Naive thymus-derived CD4-positive, alpha-beta T cell (primary cell): ENCODE measurements at regions of chr16 and their contacts with region 1.

Region 1: DNA sequence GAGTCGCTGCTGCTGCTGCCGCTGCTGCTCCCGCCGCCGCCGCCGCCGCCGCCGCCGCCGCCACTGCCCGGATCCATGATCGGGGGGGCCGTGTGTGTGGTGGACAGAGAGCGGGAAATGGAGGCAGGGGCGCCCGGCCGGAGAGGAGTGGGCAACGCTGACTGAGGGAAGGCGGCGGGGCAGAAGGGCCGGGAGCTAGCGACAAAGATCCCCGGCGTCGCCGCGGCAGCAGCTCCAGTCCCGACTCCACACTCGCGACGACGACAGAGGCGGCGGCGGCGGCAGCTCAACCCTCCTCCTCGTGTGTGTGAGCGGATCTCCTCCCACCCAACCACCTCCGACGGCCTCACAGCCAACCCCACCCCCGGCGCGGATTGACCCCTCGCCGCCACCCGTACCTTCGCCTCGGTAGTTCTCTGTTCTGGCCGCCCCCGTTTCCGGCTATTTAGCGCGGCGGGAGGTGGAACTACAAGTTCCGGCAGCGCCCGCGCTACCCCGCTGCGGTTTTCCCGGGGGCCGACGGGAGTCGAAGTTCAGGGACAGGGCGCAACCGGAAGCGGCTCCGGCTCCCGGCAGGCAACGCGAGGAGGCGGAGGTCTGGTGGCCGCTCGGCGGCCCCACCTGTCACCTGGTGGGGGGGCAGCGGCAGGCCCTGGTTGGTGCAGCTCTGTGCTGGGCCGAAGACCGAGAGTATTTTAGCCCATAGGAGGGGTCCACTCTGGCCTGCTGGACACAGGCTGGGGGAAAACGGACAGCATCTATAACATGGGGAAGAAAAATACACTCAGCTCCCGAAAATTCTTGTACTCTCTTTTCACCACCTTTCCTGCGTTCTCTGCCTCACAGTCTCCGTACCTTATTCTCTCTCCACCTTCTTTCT is at the start of gene GSPT1:
- DNase-seq: peak; percentile 96 to 100 (median 99)
- ATAC-seq: peak; percentile 94
- H3K4me3 ChIP-seq: peak within 1 kb of the TSS; percentile 74
- H3K4me3 Mint-ChIP-seq: peak within 1 kb of the TSS; percentile 85 to 99 (median 96)
- H3K27ac ChIP-seq: peak within 1 kb of the TSS; percentile 87
- H3K27ac Mint-ChIP-seq: peak within 1 kb of the TSS; percentile 87 to 98 (median 95)
- H3K4me1 ChIP-seq: peaks cover 13 to 24% of the 10 kb centered on the region in 2 donors
- H3K4me1 Mint-ChIP-seq: peaks cover 23 to 37% (median 34%) of the 10 kb centered on the region in 7 donors
- H3K27me3 ChIP-seq: no peaks in the 10 kb centered on the region
- H3K27me3 Mint-ChIP-seq: peaks cover 0 to 10% (median 0%) of the 10 kb centered on the region in 5 donors
- total RNA-seq, gene GSPT1: 92.8 to 148 (median 101) TPM

Region 2: DNA sequence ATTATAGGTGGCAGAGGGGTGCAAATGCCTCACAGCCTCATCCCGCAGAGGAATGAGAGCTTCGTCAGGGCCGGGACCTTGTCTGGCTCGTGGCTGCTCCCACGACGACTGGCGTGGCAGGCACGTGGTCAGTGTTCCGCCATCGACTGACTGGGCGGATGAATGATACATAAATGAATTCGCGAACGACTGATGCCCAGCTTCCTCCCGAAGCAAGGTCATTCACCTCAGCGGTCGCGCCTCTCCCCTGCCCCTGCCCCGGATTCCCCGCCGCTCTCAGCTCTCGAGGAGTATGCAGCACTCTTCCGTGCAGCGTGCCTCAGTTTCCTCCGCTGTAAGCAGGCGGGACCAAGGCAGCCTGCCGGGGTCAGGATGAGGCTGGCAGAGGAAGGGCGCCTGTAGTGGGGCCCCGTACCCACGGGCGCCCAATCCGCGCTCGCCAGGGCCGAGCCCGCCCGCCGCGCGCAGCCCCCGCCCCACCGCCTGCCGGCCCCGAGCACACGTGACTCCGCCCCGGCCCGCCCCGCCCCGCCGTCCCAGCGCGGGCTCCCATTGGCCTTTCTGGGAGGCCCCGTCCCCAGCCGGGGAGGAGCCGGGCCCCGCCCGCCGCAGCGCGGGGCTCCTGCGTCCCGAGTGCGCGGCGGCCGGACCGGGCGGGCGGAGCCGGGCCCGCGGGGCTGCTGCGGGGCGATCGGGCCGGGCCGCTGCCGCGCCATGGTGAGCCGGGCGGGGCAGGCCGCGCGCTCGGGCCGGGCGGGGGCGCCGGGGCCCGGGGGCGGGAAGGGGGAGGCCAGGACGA is 247.9 kb before region 1 on chr16 and contains the start of gene SNN:
- CTCF ChIA-PET with region 1: no interaction called
- POLR2A ChIA-PET with region 1: no interaction called
- intact Hi-C with region 1: loop called in 1 of 2 experiments (anchors 5 kb)
- DNase-seq: peak; percentile 76 to 91 (median 83)
- ATAC-seq: peak; percentile 89
- H3K4me3 ChIP-seq: peak within 1 kb of the TSS; percentile 77
- H3K4me3 Mint-ChIP-seq: peak within 1 kb of the TSS; percentile 88 to 96 (median 91)
- H3K27ac ChIP-seq: peak within 1 kb of the TSS; percentile 85
- H3K27ac Mint-ChIP-seq: peak within 1 kb of the TSS; percentile 85 to 98 (median 96)
- H3K4me1 ChIP-seq: peaks cover 36 to 80% of the 10 kb centered on the region in 2 donors
- H3K4me1 Mint-ChIP-seq: peaks cover 53 to 87% (median 71%) of the 10 kb centered on the region in 7 donors
- H3K27me3 ChIP-seq: no peaks in the 10 kb centered on the region
- H3K27me3 Mint-ChIP-seq: no peaks in the 10 kb centered on the region
- total RNA-seq, gene SNN: 17.0 to 86.8 (median 34.4) TPM

Region 3: GRCh38 chr16:11783319-11784037 is 132.4 kb before region 1 on chr16:
- CTCF ChIA-PET with region 1: no interaction called
- POLR2A ChIA-PET with region 1: no interaction called
- intact Hi-C with region 1: loop called in 1 of 2 experiments (anchors 5 kb)
- DNase-seq: peak; percentile 31 to 89 (median 82)
- ATAC-seq: peak; percentile 90
- H3K4me3 ChIP-seq: peak overlapping the region; percentile 52
- H3K4me3 Mint-ChIP-seq: peak overlapping the region; percentile 79 to 92 (median 85)
- H3K27ac ChIP-seq: peak overlapping the region; percentile 96
- H3K27ac Mint-ChIP-seq: peak overlapping the region; percentile 95 to 99 (median 99)
- H3K4me1 ChIP-seq: peaks cover 33 to 49% of the 10 kb centered on the region in 2 donors
- H3K4me1 Mint-ChIP-seq: peaks cover 41 to 68% (median 62%) of the 10 kb centered on the region in 7 donors
- H3K27me3 ChIP-seq: no peaks in the 10 kb centered on the region
- H3K27me3 Mint-ChIP-seq: no peaks in the 10 kb centered on the region

Region 4: DNA sequence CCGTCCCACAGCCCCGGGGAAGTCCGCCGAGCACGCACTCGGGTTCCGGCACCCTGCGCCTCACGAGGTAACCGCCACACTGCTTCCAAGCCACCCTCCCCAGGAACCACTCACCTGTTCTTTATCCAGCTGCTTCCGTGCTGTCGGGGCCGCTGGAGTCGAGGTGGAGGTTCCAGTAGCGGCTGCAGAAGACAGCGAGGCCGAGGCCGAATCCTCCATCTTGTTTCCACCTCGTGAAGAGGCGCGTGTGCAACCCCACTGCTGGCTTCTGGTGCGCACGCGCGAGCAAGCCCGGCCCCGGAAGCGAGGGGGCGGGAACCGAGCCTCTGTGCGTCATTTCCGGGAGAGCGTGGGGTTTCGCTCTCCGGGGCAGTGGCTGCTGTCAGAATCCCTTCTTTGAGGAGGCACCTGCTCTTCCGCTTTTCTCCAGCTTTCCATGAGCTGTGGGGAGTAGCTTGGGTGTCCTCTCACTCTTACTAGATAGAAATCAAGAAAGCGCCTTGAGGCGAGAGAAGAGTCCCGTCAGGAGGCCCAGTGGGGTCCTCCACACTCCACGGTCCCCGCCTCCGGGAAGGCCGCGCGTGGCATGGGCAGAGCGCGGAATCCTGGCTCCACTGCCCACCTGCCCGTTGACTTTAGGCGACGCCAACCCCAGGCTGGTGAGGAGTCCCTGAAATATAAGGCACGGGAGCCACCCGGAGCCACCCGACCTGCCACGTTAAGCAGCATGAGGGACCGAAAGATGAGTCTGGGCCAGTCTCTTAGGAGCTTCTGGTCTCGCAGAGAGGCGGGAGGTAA is 64.4 kb before region 1 on chr16 and contains the start of gene RSL1D1:
- CTCF ChIA-PET with region 1: no interaction called
- POLR2A ChIA-PET with region 1: interaction called, 10 read pairs
- intact Hi-C with region 1: loop called (anchors 1 kb)
- DNase-seq: peak; percentile 90 to 99 (median 96)
- ATAC-seq: peak; percentile 92
- H3K4me3 ChIP-seq: peak within 1 kb of the TSS; percentile 95
- H3K4me3 Mint-ChIP-seq: peak within 1 kb of the TSS; percentile 94 to 99 (median 99)
- H3K27ac ChIP-seq: peak within 1 kb of the TSS; percentile 89
- H3K27ac Mint-ChIP-seq: peak within 1 kb of the TSS; percentile 91 to 98 (median 97)
- H3K4me1 ChIP-seq: peaks cover 29% of the 10 kb centered on the region in 2 donors
- H3K4me1 Mint-ChIP-seq: peaks cover 32 to 72% (median 63%) of the 10 kb centered on the region in 7 donors
- H3K27me3 ChIP-seq: no peaks in the 10 kb centered on the region
- H3K27me3 Mint-ChIP-seq: no peaks in the 10 kb centered on the region
- total RNA-seq, gene RSL1D1: 141 to 255 (median 219) TPM

Region 5: DNA sequence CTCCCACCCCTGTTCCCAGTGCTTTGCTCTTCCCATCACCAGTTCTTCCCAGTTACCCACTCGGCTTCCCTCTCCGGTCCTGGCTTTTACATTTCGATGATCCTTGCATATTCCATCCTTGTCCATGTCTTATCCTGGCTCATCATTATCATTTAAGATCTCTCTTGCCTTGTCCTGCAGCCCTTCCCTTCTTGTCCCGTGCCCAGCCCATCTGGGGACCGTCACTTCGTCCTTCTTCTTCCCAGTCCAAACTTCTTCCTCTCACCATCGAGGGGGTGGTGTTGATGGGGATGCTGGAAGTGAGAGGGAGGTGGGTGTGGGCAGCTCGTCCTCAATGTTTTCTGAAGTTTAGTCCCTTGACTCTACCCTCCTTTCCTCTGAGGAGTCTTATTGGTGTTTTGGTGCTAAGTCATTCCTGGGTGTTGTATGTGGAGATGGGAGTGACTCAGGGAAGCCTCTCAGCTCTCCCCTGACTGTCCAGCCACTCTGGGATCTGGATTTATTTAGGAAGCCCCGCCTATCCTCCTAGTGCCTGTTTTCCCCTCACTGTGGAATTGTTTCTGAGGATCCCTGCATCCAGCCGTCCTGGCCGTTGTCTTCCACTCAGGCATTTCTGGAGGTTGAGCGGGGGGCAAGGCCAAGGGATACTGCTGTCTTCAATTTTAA is 61.6 kb after region 1 on chr16:
- CTCF ChIA-PET with region 1: no interaction called
- POLR2A ChIA-PET with region 1: interaction called, 4 read pairs
- intact Hi-C with region 1: loop called (anchors 1 kb)
- DNase-seq: no peak
- ATAC-seq: no peak
- H3K4me3 ChIP-seq: peak overlapping the region; percentile 71
- H3K4me3 Mint-ChIP-seq: peak overlapping the region; percentile 85 to 99 (median 94)
- H3K27ac ChIP-seq: peak overlapping the region; percentile 88
- H3K27ac Mint-ChIP-seq: peak overlapping the region; percentile 60 to 97 (median 93)
- H3K4me1 ChIP-seq: peaks cover 11 to 19% of the 10 kb centered on the region in 2 donors
- H3K4me1 Mint-ChIP-seq: peaks cover 33 to 55% (median 42%) of the 10 kb centered on the region in 7 donors
- H3K27me3 ChIP-seq: no peaks in the 10 kb centered on the region
- H3K27me3 Mint-ChIP-seq: no peaks in the 10 kb centered on the region

Region 6: GRCh38 chr16:12079412-12079965 is 163.6 kb after region 1 on chr16:
- CTCF ChIA-PET with region 1: no interaction called
- POLR2A ChIA-PET with region 1: interaction called, 3 read pairs
- intact Hi-C with region 1: loop called (anchors 1 to 5 kb)
- DNase-seq: peak in 5 of 9 donors; percentile 42 to 61 (median 52)
- ATAC-seq: peak; percentile 34
- H3K4me3 ChIP-seq: peak overlapping the region; percentile 24
- H3K4me3 Mint-ChIP-seq: peak overlapping the region; percentile 54 to 94 (median 78)
- H3K27ac ChIP-seq: peak overlapping the region; percentile 84
- H3K27ac Mint-ChIP-seq: peak overlapping the region; percentile 88 to 97 (median 96)
- H3K4me1 ChIP-seq: peaks cover 40 to 66% of the 10 kb centered on the region in 2 donors
- H3K4me1 Mint-ChIP-seq: peaks cover 34 to 93% (median 77%) of the 10 kb centered on the region in 7 donors
- H3K27me3 ChIP-seq: no peaks in the 10 kb centered on the region
- H3K27me3 Mint-ChIP-seq: no peaks in the 10 kb centered on the region